Adrenal gland (tissue), 19 donors: ENCODE measurements at regions of chr1 and their contacts with region 1.

Region 1: DNA sequence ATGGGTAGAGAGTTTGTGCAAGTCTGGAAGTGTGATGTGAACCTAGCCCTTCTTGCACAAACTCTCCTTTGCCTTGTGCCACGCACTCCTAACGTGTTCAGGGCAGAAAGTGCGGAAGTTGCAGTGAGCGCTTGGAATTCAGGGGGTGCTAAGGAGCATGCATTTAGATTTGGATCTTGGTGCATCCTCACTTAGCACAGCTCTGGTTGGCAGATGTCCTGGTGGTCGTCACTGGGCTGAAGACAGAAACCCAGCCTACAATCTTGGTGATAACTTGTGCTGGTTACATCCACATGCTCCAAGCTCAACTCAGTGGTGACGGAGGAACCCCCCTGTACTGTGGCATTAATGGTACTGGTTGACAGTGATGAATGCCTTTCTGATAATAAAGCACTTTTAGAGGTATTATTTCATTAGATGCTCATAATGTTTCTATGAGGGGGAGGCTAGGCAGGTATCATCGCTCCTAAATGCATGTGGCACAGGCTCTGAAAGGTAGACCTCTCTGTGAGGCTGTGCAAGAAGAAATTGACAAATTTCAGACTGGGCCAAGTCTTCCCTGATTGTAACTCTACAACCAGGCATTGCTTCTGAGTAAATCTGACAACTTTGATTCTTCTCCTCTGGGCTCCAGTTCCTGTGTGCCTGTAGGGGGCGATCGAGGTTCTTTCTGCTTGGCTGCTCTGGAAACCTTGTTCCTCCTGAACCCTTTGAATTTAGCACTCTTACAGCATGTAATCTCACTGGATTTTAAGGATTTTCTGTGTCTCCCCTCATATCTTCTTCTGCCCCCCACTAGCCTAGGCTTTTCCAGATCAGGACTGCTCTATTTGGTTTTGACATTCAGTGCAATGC is 40.6 kb downstream of the MAPKAPK2 start:
- DNase-seq: peak in 5 of 7 donors; percentile 49 to 70 (median 62)
- H3K4me3 ChIP-seq: no peak overlapping the region
- H3K27ac ChIP-seq: no peak overlapping the region
- H3K4me1 ChIP-seq: peaks cover 19 to 59% of the 10 kb centered on the region in 2 donors
- H3K27me3 ChIP-seq: no peaks in the 10 kb centered on the region
- CTCF ChIP-seq: peak; percentile 39 to 52 (median 46)
- POLR2A ChIP-seq: no peak

Region 2: DNA sequence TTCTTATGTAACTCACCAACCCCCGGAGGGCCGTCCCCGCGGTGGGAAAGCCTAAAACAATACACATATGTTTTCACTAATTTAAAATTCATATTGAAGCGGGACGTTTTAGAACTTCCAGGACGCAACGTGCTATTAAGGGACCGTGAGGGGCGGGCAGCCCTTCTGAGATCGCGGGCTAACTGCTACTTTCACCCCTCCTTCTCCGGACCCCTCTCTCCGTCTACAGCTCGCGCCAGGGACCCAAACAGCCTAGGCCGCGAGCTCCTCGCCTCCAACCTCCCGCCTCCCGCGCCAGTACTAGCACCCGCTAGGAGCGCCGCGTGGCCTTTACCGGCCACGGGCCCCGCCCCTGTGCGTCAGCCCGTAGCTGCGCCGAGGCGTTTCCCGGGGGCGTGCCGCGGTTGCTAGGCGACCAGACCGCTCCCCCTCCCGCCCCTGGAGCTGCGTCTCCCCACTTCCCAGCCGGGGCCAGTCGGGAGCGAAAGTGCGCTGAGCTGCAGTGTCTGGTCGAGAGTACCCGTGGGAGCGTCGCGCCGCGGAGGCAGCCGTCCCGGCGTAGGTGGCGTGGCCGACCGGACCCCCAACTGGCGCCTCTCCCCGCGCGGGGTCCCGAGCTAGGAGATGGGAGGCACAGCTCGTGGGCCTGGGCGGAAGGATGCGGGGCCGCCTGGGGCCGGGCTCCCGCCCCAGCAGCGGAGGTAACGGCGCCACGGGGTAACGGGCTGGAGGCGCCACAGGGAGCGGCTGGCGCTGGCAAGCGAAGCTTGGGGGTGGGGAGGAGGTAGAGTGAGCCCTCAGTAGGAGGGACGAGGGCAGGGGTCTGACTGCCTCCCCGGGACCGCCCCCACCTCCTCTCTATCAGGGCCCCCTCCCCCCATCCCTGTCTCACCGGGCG is 90.0 kb before region 1 on chr1 and contains the start of gene DYRK3:
- intact Hi-C with region 1: loop called in 1 of 2 experiments (anchors 10 kb)
- DNase-seq: peak; percentile 95 to 97 (median 97)
- H3K4me3 ChIP-seq: peak within 1 kb of the TSS; percentile 37 to 97 (median 80)
- H3K27ac ChIP-seq: peak within 1 kb of the TSS in 4 of 5 donors; percentile 27 to 85 (median 62)
- H3K4me1 ChIP-seq: peaks cover 8 to 28% of the 10 kb centered on the region in 2 donors
- H3K27me3 ChIP-seq: no peaks in the 10 kb centered on the region
- CTCF ChIP-seq: no peak
- POLR2A ChIP-seq: peak; percentile 72 to 93
- total RNA-seq, gene DYRK3: 2.9 to 6.3 (median 5.2) TPM

Region 3: GRCh38 chr1:206684478-206685333 is 40.6 kb before region 1 on chr1 and contains the start of gene MAPKAPK2:
- intact Hi-C with region 1: loop called in 1 of 2 experiments (anchors 5 kb)
- DNase-seq: peak; percentile 69 to 88 (median 84)
- H3K4me3 ChIP-seq: peak within 1 kb of the TSS; percentile 21 to 98 (median 84)
- H3K27ac ChIP-seq: peak within 1 kb of the TSS; percentile 93 to 100 (median 95)
- H3K4me1 ChIP-seq: peaks cover 25 to 37% of the 10 kb centered on the region in 2 donors
- H3K27me3 ChIP-seq: no peaks in the 10 kb centered on the region
- CTCF ChIP-seq: no peak
- POLR2A ChIP-seq: peak in 1 of 2 donors; percentile 47
- total RNA-seq, gene MAPKAPK2: 25.3 to 129 (median 90.3) TPM